MCF 10A (cell line): ENCODE measurements at regions of chr7 and their contacts with region 1.

Region 1: GRCh38 chr7:6272481-6273323 is at the start of gene CYTH3:
- DNase-seq: peak; percentile 70
- H3K4me3 Mint-ChIP-seq: peak within 1 kb of the TSS; percentile 83
- H3K27ac Mint-ChIP-seq: peak within 1 kb of the TSS; percentile 50
- H3K4me1 Mint-ChIP-seq: peaks cover 24% of the 10 kb centered on the region
- H3K27me3 Mint-ChIP-seq: no peaks in the 10 kb centered on the region
- CTCF ChIP-seq: no peak
- total RNA-seq, gene CYTH3: 19.3 and 23.5 TPM in 2 replicates

Region 2: DNA sequence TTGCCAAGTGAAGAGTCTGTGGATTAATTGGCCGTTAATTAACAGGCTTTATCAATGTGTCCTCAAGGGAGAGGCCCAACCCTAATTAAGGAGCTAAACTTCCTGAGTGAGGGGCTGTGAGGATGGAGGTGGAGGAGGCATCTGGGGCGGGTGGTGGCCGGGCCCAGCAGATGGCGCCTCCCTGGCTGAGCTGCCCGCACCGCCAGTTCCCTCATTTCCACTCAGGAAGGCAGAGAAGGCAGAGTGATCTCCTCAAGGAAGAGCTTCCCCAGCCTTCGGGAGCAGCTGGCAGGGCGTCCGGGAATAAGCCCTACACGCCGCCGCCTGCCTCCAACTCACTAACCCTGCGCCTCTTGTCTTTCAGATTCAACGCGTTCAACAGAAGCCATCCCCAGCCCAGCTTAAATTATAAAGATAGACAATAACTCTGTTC is 112.5 kb before region 1 on chr7:
- CTCF ChIA-PET with region 1: interaction called, 3 read pairs
- POLR2A ChIA-PET with region 1: no interaction called
- intact Hi-C with region 1: loop called (anchors 1 kb)
- DNase-seq: peak; percentile 13
- H3K4me3 Mint-ChIP-seq: no peak overlapping the region
- H3K27ac Mint-ChIP-seq: no peak overlapping the region
- H3K4me1 Mint-ChIP-seq: no peaks in the 10 kb centered on the region
- H3K27me3 Mint-ChIP-seq: no peaks in the 10 kb centered on the region
- CTCF ChIP-seq: peak; percentile 35

Region 3: DNA sequence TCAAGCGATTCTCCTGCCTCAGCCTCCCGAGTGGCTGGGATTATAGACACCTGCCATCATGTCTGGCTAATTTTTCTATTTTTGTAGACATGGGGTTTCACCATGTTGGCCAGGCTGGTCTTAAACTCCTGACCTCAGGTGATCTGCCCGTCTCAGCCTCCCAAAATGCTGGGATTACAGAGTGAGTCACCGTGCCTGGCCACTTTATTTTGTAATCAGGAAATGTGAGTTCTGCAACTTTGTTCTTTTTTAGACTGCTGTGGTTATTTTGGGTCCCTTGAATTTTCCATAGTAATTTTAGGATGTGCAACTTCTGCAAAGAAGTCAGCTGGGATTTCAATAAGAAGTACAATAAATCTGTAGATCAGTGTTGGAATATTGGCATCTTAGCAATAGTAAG is 97.1 kb before region 1 on chr7:
- CTCF ChIA-PET with region 1: interaction called, 3 read pairs
- POLR2A ChIA-PET with region 1: interaction called, 3 read pairs
- intact Hi-C with region 1: loop called (anchors 5 kb)
- DNase-seq: peak; percentile 79
- H3K4me3 Mint-ChIP-seq: no peak overlapping the region
- H3K27ac Mint-ChIP-seq: no peak overlapping the region
- H3K4me1 Mint-ChIP-seq: peaks cover 5% of the 10 kb centered on the region
- H3K27me3 Mint-ChIP-seq: no peaks in the 10 kb centered on the region
- CTCF ChIP-seq: no peak

Region 4: DNA sequence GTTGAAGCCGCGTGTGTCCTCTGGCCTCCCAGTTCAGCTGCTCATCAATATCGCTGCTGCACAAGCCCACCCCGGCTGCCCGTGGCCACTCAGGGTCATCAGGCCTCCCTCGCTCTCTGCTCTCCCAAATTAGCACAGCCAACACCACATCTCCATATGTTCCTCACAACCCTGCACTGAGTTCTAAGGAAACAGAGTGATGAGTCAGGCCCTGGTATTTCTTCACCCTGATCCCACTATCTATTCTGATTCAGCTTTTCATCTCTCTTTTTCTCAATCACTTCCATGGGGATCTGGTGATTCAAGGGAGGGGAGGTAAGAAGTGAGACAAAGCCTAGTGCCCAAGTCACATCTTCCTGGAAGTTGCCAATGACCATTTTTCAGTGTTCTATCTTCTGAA is 24.1 kb before region 1 on chr7:
- CTCF ChIA-PET with region 1: interaction called, 5 read pairs
- POLR2A ChIA-PET with region 1: interaction called, 12 read pairs
- intact Hi-C with region 1: no loop called
- DNase-seq: peak; percentile 80
- H3K4me3 Mint-ChIP-seq: no peak overlapping the region
- H3K27ac Mint-ChIP-seq: peak overlapping the region; percentile 52
- H3K4me1 Mint-ChIP-seq: peaks cover 54% of the 10 kb centered on the region
- H3K27me3 Mint-ChIP-seq: no peaks in the 10 kb centered on the region
- CTCF ChIP-seq: no peak

Region 5: DNA sequence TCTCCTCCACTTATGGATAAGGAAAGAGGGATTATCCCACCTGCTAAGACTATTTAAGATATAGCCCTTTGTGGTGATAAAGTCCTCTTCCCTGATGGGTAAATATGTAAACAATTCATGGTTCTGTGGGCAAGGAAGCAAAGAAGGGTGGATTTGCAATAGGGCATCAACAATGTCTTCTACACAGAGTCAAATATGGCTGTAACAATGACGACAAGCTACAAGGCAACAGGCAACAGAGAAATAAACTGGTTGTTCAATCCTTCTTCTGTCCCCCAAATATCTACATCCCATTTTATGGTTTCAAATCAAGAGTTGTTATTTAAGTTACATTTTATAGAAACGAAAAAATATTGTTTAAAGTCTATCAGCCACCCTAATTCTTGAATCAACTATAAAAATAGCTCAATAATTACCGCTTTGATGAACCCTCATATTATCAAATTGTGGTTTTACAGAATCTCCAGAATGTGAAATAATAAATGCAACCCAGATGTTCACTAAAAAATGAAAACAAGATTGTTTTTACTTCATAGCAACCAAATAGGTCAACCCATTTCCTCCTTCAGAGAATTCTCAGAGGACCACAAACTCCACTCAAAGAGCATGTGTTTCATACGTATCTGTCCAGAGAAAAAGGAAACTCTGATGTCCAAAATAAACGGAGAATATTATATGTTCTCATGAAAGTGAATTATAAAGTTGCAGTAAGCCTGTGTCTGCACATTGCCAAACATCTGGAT is 14.1 kb before region 1 on chr7:
- CTCF ChIA-PET with region 1: interaction called, 8 read pairs
- POLR2A ChIA-PET with region 1: interaction called, 17 read pairs
- intact Hi-C with region 1: no loop called
- DNase-seq: no peak
- H3K4me3 Mint-ChIP-seq: no peak overlapping the region
- H3K27ac Mint-ChIP-seq: no peak overlapping the region
- H3K4me1 Mint-ChIP-seq: peaks cover 22% of the 10 kb centered on the region
- H3K27me3 Mint-ChIP-seq: no peaks in the 10 kb centered on the region
- CTCF ChIP-seq: no peak

Region 6: DNA sequence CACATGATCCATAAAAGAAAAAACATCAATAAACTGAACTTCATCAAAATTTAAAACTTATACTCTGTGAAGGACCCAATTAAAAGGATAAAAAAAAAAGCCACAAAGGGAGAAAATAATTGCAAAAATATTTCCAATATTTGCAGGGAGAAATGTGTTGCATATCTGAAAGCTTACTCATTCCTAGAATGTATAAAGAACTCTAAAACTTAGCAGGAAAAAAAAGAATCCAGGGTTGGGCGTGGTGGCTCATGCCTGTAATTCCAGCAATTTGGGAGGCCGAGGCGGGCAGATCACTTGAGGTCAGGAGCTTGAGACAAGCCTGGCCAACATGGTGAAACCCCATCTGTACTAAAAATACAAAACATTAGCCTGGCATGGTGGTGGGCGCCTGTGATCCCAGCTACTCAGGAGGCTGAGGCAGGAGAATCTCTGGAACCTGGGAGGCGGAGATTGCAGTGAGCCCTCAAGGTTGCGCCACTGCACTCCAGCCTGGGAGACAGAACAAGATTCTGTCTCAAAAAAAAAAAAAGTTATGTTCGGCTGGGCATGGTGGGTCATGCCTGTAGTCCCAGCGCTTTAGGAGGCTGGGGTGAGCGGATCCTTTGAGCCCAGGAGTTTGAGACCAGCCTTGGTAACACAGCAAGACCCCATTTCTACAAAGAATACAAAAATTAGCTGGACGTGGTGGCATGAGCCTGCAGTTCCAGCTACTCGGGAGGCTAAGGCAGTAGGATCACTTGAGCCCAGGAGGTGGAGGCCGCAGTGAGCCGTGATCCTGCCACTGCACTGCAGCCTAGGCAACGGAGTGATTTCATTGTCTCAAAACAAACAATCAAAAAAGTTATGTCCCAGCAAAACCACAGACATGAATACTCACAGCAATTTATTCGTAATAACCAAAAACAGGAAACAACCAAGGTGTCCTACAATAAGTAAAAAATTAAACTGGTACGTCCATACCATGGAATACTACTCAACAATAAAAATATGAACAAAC is 11.0 kb after region 1 on chr7:
- CTCF ChIA-PET with region 1: interaction called, 6 read pairs
- POLR2A ChIA-PET with region 1: interaction called, 29 read pairs
- intact Hi-C with region 1: no loop called
- DNase-seq: peak; percentile 42
- H3K4me3 Mint-ChIP-seq: peak overlapping the region; percentile 57
- H3K27ac Mint-ChIP-seq: peak overlapping the region; percentile 93
- H3K4me1 Mint-ChIP-seq: peaks cover 12% of the 10 kb centered on the region
- H3K27me3 Mint-ChIP-seq: no peaks in the 10 kb centered on the region
- CTCF ChIP-seq: no peak

Region 7: DNA sequence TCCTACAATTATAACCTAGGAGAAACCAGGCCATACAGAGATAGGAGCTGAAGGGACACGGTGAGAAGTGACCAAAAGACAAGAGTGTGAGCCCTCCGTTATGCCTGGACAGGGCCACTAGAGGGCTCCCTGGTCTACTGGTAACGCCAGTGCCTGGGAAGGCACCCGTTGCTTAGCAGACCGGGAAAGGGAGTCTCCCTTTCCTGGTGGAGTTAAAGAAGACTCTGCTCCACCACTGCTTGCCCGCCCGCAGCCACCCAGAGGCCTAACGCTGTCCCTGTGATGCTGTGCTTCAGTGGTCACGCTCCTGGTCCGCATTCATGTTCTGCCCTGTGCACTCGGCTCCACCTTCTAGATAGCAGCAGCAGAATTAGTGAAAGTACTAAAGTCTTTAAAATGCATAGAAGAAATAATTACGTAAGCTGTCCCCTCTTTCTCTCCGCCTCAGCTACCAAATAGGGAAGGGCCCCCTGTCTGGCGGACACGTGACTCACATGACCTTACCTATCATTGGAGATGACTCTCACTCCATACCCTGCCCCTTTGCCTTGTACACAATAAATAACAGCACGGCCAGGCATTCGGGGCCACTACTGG is 243.8 kb after region 1 on chr7:
- CTCF ChIA-PET with region 1: no interaction called
- POLR2A ChIA-PET with region 1: no interaction called
- intact Hi-C with region 1: no loop called
- DNase-seq: peak; percentile 86
- H3K4me3 Mint-ChIP-seq: peak overlapping the region; percentile 51
- H3K27ac Mint-ChIP-seq: no peak overlapping the region
- H3K4me1 Mint-ChIP-seq: peaks cover 7% of the 10 kb centered on the region
- H3K27me3 Mint-ChIP-seq: no peaks in the 10 kb centered on the region
- CTCF ChIP-seq: peak; percentile 88

Region 8: GRCh38 chr7:6651851-6652445 is 379.2 kb after region 1 on chr7:
- CTCF ChIA-PET with region 1: no interaction called
- POLR2A ChIA-PET with region 1: no interaction called
- intact Hi-C with region 1: no loop called
- DNase-seq: no peak
- H3K4me3 Mint-ChIP-seq: no peak overlapping the region
- H3K27ac Mint-ChIP-seq: no peak overlapping the region
- H3K4me1 Mint-ChIP-seq: no peaks in the 10 kb centered on the region
- H3K27me3 Mint-ChIP-seq: no peaks in the 10 kb centered on the region
- CTCF ChIP-seq: no peak